ENCODE measurements at regions of chr14 and their contacts with region 1.

Region 1: DNA sequence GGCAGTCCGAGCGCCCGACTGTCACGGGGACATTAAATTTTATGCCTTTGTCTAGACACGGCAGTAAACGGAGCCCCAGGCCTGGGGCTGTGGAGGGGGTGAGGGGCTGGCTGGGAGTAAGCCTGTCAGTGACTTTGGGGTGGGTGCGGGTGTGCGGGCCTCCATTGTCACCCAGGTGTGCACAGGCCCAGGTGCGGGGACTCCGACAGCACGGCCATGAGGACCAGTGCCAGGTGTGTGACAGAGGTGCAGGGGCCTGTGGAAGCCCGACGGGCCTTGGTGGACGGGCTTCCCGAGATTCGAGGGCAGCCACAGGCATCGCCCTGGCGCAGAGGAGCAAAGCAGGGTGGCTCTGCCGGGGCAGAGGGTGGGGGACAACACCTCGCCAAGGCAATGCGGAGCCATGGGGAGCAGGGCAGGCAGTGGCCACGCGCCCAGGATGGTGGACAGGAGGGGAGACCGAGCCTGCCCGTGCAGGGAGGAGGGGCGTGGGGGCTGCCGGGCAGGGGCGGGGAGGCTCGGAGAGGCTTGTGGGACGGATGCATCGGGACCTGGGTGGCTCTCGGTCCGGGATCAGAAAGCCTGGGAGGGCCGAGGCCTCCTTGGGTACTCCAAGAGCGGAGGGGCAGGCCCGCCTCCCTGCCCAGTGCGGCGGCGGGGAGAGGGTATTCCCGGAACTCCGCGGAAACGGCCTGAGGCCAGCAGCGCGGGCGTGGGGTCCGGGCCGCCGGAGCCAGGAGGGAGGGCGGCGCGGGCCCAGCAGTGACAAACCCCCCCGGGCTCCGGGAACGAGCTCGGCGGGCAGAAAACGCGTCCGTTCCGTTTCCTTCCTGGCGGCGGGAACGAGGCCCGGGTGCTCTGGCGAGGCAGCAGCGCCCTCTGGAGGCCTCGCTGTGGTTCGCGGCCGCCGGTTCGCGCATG is 1.5 kb downstream of the TMEM121 start:
- DNase-seq: peak; percentile 90
- ATAC-seq: peak; percentile 62
- H3K4me3 Mint-ChIP-seq: peak overlapping the region; percentile 74
- H3K27ac Mint-ChIP-seq: peak overlapping the region; percentile 58
- H3K4me1 Mint-ChIP-seq: peaks cover 15% of the 10 kb centered on the region
- H3K27me3 Mint-ChIP-seq: peaks cover 10% of the 10 kb centered on the region

Region 2: GRCh38 chr14:105180592-105181548 is 347.1 kb before region 1 on chr14 and contains the start of gene NUDT14:
- CTCF ChIA-PET with region 1: no interaction called
- POLR2A ChIA-PET with region 1: no interaction called
- intact Hi-C with region 1: loop called in 1 of 2 experiments (anchors 10 kb)
- DNase-seq: peak; percentile 93
- ATAC-seq: peak; percentile 90
- H3K4me3 Mint-ChIP-seq: peak within 1 kb of the TSS; percentile 69
- H3K27ac Mint-ChIP-seq: no peak within 1 kb of the TSS
- H3K4me1 Mint-ChIP-seq: peaks cover 10% of the 10 kb centered on the region
- H3K27me3 Mint-ChIP-seq: no peaks in the 10 kb centered on the region
- total RNA-seq, gene NUDT14: 12.3 to 13.5 TPM

Region 3: GRCh38 chr14:105228562-105228961 is 299.4 kb before region 1 on chr14:
- CTCF ChIA-PET with region 1: no interaction called
- POLR2A ChIA-PET with region 1: no interaction called
- intact Hi-C with region 1: no loop called
- DNase-seq: no peak
- ATAC-seq: no peak
- H3K4me3 Mint-ChIP-seq: no peak overlapping the region
- H3K27ac Mint-ChIP-seq: no peak overlapping the region
- H3K4me1 Mint-ChIP-seq: no peaks in the 10 kb centered on the region
- H3K27me3 Mint-ChIP-seq: no peaks in the 10 kb centered on the region

Region 4: DNA sequence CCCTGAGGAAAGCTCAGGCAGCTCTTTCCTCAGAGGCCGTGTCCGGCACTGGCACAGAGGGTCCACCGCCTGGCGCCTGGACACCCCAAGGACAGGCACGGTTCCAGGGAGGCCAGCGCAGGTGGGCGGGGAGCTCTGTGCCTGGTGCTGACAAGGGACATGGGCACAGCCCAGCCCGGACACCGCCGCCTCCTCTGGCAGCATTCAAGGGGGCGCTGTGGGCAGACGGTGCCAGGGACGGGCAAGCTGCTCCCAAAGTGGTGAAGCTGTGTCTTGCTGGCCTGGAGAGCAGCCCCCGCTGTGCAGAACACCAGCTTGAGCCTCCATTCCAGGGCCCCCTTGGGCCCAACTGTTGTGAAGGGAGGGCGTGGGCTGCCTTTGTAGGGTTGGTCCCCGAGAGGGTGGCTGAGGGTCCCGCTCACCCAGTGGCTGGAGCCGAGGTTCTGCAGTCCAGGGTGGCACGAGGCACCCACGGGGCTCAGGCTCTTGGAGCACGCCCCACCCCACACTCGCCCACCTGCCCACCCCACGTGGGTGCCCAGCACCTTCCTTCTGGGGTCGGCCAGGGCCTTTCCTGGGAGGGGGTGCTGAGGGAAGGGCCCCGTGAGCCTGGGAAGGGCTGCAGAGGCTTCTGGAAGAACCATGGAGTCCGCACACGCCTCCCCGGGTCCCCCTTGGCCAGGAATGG is 158.8 kb before region 1 on chr14:
- CTCF ChIA-PET with region 1: interaction called, 5 read pairs
- POLR2A ChIA-PET with region 1: no interaction called
- intact Hi-C with region 1: loop called (anchors 1 to 2 kb)
- DNase-seq: no peak
- ATAC-seq: no peak
- H3K4me3 Mint-ChIP-seq: no peak overlapping the region
- H3K27ac Mint-ChIP-seq: no peak overlapping the region
- H3K4me1 Mint-ChIP-seq: peaks cover 4% of the 10 kb centered on the region
- H3K27me3 Mint-ChIP-seq: no peaks in the 10 kb centered on the region

Region 5: DNA sequence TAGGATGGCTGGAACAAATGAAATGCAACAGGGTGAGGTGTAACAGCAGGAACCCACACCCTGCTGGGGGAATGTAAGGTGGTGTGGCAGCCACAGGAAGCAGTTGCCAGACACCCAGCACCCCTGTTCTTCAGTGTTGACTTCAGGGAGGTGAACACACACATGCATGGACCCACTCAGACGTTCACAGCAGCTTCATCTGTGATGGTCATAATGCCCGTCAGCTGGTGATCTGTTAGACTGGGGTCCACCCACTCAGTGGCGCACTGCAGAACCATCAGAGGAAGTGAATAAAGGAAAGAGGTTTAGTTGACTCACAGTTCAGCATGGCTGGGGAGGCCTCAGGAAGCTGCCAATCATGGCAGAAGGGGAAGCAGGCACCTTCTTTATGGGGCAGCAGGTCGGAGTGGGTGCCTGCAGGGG is 152.3 kb before region 1 on chr14:
- CTCF ChIA-PET with region 1: interaction called, 5 read pairs
- POLR2A ChIA-PET with region 1: no interaction called
- intact Hi-C with region 1: loop called (anchors 1 to 2 kb)
- DNase-seq: peak; percentile 83
- ATAC-seq: peak; percentile 77
- H3K4me3 Mint-ChIP-seq: no peak overlapping the region
- H3K27ac Mint-ChIP-seq: peak overlapping the region; percentile 78
- H3K4me1 Mint-ChIP-seq: peaks cover 12% of the 10 kb centered on the region
- H3K27me3 Mint-ChIP-seq: no peaks in the 10 kb centered on the region

Region 6: GRCh38 chr14:105414456-105415371 is 113.2 kb before region 1 on chr14:
- CTCF ChIA-PET with region 1: interaction called, 3 read pairs
- POLR2A ChIA-PET with region 1: no interaction called
- intact Hi-C with region 1: loop called in 1 of 2 experiments (anchors 2 kb)
- DNase-seq: peak; percentile 81
- ATAC-seq: peak; percentile 85
- H3K4me3 Mint-ChIP-seq: peak overlapping the region; percentile 61
- H3K27ac Mint-ChIP-seq: no peak overlapping the region
- H3K4me1 Mint-ChIP-seq: peaks cover 11% of the 10 kb centered on the region
- H3K27me3 Mint-ChIP-seq: peaks cover 17% of the 10 kb centered on the region

Region 7: DNA sequence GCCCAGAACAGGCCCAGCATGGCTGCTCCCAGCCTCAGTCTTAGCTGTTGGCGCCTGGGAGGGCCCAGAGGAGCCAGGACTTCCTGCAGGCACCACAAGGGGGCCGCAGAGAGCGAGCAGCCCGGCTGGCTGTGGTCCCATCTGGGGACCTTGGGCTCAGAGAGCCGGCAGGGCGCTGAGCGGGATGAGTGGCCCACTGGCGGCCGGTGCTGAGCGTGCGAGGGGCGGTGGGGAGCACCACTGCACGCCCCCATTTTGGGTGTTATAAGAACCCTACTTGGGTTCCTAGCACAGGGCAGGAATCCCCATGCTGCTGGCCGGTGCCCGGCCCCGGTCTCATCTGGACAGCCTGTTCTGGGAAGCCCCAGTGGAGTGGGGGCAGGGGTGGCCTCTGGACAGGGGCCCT is 79.2 kb before region 1 on chr14:
- CTCF ChIA-PET with region 1: no interaction called
- POLR2A ChIA-PET with region 1: no interaction called
- intact Hi-C with region 1: loop called in 1 of 2 experiments (anchors 1 kb)
- DNase-seq: peak; percentile 77
- ATAC-seq: peak; percentile 96
- H3K4me3 Mint-ChIP-seq: no peak overlapping the region
- H3K27ac Mint-ChIP-seq: no peak overlapping the region
- H3K4me1 Mint-ChIP-seq: no peaks in the 10 kb centered on the region
- H3K27me3 Mint-ChIP-seq: no peaks in the 10 kb centered on the region

Region 8: DNA sequence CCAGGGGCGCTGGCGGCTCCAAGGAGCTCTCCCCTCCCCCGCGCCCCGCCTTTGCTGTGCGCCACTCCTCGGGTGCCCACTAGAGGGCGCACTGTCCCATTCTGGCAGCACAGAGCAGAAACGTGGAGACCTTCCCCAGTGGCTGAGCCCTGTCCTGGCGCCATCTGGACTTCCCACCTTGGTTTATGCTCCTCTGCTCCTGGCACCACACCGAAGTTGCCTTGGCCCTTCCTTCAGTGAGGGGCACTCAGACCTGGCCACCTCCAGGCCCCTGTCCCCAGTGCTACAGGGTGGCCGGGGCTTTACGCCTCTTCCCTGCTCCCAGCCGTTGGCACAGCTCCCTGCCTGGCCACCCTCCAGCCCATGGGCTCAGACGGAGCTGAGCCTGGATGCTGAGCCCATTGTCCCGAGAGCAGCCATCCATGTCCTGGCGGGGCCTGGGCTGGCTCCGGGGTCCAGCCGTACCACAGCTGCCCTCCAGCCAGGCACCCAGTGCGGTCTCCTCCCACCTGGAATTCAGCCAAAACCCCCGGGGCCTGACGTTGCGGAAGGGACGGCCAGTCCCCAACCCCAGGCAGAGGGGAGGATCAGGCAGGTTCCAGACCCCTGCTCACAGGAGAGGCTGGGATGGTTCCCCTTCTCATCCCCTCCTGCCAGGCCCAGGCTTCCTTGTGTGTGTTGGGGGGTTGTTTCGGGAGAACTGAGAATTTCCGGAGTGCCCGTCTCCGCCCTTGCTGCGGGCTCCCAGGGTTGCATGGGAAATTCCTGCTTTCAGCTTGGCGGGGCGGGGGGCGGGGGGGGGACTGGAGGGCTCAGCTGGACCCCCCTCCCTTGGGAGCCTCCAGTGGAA is 46.7 kb before region 1 on chr14:
- CTCF ChIA-PET with region 1: no interaction called
- POLR2A ChIA-PET with region 1: interaction called, 3 read pairs
- intact Hi-C with region 1: loop called in 1 of 2 experiments (anchors 2 kb)
- DNase-seq: peak; percentile 95
- ATAC-seq: peak; percentile 69
- H3K4me3 Mint-ChIP-seq: peak overlapping the region; percentile 62
- H3K27ac Mint-ChIP-seq: peak overlapping the region; percentile 87
- H3K4me1 Mint-ChIP-seq: peaks cover 48% of the 10 kb centered on the region
- H3K27me3 Mint-ChIP-seq: peaks cover 5% of the 10 kb centered on the region